Testis (tissue), 5 donors: ENCODE measurements at regions of chr17 and their contacts with region 1.

Region 1: DNA sequence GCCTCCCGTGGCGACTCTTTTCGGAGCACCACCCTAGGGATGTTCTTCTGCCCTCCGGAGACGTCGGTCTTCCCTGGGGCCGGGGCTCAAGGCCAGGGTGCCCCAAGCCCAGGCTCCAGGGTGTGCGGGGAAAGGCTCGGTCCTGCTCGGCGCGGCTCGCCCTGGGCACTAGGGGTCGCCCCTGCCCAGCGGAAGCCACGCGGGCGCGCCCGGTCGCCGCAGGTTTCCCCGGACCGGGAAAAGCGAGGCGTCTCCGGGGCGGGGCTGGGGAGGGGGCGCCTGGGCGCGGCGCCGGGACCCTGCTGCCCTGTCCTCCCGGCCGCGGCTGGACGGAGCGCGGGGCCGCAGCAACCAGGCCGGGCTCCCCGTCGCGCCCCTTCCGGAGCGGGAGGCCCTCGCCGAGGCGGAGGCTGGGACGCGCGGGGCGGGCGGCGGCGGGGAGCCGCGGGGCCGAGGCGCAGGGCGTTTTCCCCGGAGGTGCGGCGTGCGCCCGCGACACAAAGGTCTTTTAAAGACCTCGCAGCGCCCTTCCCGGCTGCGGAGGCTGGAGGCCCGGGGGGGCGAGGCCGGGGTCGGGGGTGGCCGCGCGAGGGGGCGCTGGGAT is 76.4 kb downstream of the MRC2 start:
- DNase-seq: peak; percentile 78
- H3K4me3 ChIP-seq: peak overlapping the region; percentile 53 to 69
- H3K27ac ChIP-seq: peak overlapping the region; percentile 57 to 76
- H3K4me1 ChIP-seq: peaks cover 23% of the 10 kb centered on the region
- H3K27me3 ChIP-seq: no peaks in the 10 kb centered on the region
- CTCF ChIP-seq: peak; percentile 80 to 85 (median 80)
- POLR2A ChIP-seq: no peak

Region 2: GRCh38 chr17:62791751-62792445 is 88.0 kb after region 1 on chr17:
- intact Hi-C with region 1: no loop called
- DNase-seq: no peak
- H3K4me3 ChIP-seq: no peak overlapping the region
- H3K27ac ChIP-seq: no peak overlapping the region
- H3K4me1 ChIP-seq: no peaks in the 10 kb centered on the region
- H3K27me3 ChIP-seq: no peaks in the 10 kb centered on the region
- CTCF ChIP-seq: no peak
- POLR2A ChIP-seq: no peak

Region 3: GRCh38 chr17:62968445-62968923 is 264.6 kb after region 1 on chr17:
- intact Hi-C with region 1: loop called (anchors 5 kb)
- DNase-seq: peak; percentile 72
- H3K4me3 ChIP-seq: no peak overlapping the region
- H3K27ac ChIP-seq: no peak overlapping the region
- H3K4me1 ChIP-seq: peaks cover 8% of the 10 kb centered on the region
- H3K27me3 ChIP-seq: no peaks in the 10 kb centered on the region
- CTCF ChIP-seq: peak; percentile 69 to 93 (median 87)
- POLR2A ChIP-seq: no peak

Region 4: GRCh38 chr17:63406689-63407330 is 702.9 kb after region 1 on chr17:
- intact Hi-C with region 1: loop called (anchors 10 kb)
- DNase-seq: peak; percentile 91
- H3K4me3 ChIP-seq: no peak overlapping the region
- H3K27ac ChIP-seq: no peak overlapping the region
- H3K4me1 ChIP-seq: no peaks in the 10 kb centered on the region
- H3K27me3 ChIP-seq: no peaks in the 10 kb centered on the region
- CTCF ChIP-seq: peak; percentile 75 to 88 (median 83)
- POLR2A ChIP-seq: no peak